Activated CD8-positive, alpha-beta T cell treated with anti-CD3 and anti-CD28 coated beads for 36 hours (primary cell): ENCODE measurements at regions of chr14 and their contacts with region 1.

Region 1: DNA sequence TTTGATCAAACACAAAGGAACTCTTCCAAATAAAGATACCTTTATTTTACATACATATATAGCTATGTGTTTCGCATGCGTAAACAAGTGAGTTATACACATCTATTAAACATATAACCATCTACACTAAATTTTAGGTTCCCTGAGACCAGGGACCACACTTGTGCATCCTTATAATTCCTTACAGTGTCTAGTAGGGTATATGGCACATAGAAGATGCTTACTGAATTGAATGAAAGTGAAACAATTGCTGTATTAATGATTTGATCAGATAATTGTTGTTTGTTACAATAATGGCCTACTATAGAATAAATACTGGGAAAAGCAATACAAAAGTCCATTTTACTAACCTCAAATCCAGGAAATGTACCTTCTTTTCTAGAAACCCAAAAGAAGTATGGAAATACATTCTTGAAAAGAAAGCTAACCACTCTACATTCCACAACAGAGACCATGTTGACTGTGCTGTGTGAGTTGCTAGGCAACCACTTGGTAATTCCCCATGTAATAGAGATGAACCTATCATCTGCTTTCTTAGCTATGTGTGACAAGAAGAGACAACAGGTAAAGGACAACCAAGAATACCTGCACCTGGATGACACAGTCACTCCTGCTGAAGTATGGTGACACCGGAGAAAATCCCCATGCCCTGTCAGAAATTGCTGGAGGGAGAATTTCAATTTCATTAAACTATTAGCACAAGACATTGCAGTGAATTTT is 11.9 kb upstream of the CIPC start:
- DNase-seq: no peak
- ATAC-seq: peak; percentile 60
- H3K4me3 Mint-ChIP-seq: no peak overlapping the region
- H3K27ac Mint-ChIP-seq: no peak overlapping the region
- H3K4me1 Mint-ChIP-seq: peaks cover 5% of the 10 kb centered on the region
- H3K27me3 Mint-ChIP-seq: no peaks in the 10 kb centered on the region
- CTCF ChIP-seq: no peak

Region 2: DNA sequence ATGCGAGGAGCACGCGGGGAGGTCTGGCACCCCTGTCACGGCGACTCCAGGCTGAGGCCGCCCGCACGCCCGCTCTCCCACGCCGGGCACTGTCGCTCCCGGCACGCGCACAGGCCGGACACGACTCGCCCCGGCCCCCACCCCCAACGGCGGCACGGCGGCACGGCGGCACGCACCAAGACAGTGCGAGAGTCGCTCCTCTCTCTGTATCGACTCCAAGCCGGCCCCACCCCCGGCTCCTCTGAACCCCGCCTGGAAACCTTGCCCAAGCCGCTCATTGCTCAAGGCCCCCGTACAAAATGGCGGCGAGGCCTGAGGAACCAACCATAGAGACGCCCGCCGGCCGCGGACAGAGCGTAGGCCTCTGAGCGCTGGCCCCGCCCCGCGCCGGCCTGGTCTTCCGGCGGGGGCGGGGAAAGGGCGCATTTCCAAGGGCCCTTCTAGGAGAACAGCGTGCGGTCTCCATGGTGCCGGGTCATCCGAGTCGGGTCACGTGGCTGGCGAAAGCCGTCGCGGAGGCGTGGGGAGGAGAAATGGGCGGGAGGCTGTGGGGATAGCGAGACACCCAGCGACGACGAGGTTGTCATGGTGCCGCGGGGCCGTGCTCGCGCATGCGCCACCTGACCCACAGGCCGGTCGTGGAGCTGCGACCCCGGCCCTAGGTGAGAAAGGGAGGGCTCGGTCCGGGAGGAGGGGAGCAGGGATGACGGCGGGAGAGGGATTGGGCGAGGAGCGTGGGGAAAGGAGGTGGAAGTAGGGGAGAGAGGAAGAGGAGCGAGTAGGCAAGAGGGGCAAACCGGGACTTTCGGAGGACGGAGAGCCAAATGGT is 11.7 kb after region 1 on chr14 and contains the start of gene CIPC:
- CTCF ChIA-PET with region 1: interaction called, 67 read pairs
- POLR2A ChIA-PET with region 1: interaction called, 5 read pairs
- intact Hi-C with region 1: no loop called
- DNase-seq: peak; percentile 99
- ATAC-seq: peak; percentile 94
- H3K4me3 Mint-ChIP-seq: peak within 1 kb of the TSS; percentile 93
- H3K27ac Mint-ChIP-seq: peak within 1 kb of the TSS; percentile 99
- H3K4me1 Mint-ChIP-seq: peaks cover 35% of the 10 kb centered on the region
- H3K27me3 Mint-ChIP-seq: no peaks in the 10 kb centered on the region
- CTCF ChIP-seq: no peak
- total RNA-seq, gene CIPC: 8.8 to 9.6 TPM